AG04450 (cell line): ENCODE measurements at regions of chr21 and their contacts with region 1.

Region 1: GRCh38 chr21:38355992-38356797 is 99.4 kb downstream of the KCNJ15 start:
- DNase-seq: peak; percentile 27
- H3K4me3 ChIP-seq: no peak overlapping the region
- H3K27ac ChIP-seq: no peak overlapping the region
- H3K27me3 ChIP-seq: peaks cover 2% of the 10 kb centered on the region
- CTCF ChIP-seq: peak; percentile 100

Region 2: GRCh38 chr21:37711836-37712568 is 644.2 kb before region 1 on chr21:
- CTCF ChIA-PET with region 1: interaction called, 16 read pairs
- POLR2A ChIA-PET with region 1: no interaction called
- DNase-seq: peak; percentile 30
- H3K4me3 ChIP-seq: no peak overlapping the region
- H3K27ac ChIP-seq: no peak overlapping the region
- H3K27me3 ChIP-seq: peaks cover 7% of the 10 kb centered on the region
- CTCF ChIP-seq: peak; percentile 99

Region 3: DNA sequence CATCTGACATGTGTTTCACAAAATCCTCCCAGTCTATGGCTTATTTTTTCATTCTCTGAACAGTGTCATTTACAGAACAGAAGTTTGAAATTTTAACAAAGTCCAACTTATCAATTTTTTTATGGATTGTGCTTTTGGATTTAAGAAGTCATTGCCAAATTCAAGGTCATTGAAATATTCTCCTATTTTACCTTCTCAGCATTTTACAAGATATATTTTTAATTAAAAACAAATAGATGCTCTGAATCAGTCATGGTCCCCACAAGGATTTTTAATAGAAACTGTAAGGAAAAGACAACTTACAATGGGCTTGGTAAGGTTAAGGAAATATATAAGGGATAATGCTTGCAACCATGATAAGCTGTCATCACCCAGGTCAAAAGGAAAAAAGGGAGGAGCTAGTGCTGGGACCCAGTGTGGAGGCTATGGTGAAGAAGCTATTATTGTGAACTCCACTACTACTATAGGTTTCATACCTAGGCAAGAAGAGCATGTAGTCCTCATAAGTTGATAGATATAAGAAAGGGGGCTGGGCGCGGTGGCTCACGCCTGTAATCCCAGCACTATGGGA is 243.9 kb before region 1 on chr21:
- CTCF ChIA-PET with region 1: no interaction called
- POLR2A ChIA-PET with region 1: no interaction called
- DNase-seq: no peak
- H3K4me3 ChIP-seq: no peak overlapping the region
- H3K27ac ChIP-seq: no peak overlapping the region
- H3K27me3 ChIP-seq: peaks cover 2% of the 10 kb centered on the region
- CTCF ChIP-seq: no peak

Region 4: DNA sequence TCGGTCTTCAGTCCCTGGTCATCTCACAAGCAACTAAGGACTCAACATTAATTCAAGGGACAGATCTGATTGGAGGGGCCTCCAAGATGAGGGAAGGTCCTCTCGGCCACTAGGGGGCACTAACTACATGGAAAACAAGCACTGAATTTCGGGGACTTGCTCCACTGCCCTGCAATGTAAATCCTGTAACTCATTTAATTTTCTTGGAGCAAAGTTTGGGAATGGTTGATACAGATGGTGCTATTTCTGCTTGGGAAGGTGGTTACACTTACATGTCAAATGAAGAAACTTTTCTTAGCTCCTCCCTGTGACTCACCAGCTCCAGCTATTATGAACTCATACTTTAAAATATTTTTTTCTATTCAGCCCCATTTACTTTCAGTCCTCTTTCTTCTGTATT is 196.8 kb before region 1 on chr21:
- CTCF ChIA-PET with region 1: interaction called, 123 read pairs
- POLR2A ChIA-PET with region 1: no interaction called
- DNase-seq: peak; percentile 74
- H3K4me3 ChIP-seq: no peak overlapping the region
- H3K27ac ChIP-seq: no peak overlapping the region
- H3K27me3 ChIP-seq: peaks cover 8% of the 10 kb centered on the region
- CTCF ChIP-seq: peak; percentile 90

Region 5: DNA sequence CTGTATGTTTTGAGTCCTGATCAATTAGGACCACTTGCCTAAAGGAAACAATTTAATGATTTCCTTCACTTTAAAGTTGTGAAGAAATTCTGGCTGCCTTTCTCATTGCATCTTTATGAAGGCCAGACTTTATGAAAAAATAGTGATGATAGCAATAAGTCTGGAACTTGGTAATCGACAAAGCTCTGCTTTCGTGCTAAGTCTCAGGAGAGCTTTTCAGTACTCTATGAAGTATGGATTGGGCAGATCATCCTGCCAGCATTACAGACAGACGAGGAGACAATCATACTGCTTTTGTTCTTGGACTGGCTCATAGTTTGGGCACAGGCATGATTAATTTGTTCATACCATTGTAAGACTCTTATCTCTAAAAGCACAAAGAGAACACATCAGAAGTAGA is 144.9 kb before region 1 on chr21:
- CTCF ChIA-PET with region 1: interaction called, 353 read pairs
- POLR2A ChIA-PET with region 1: no interaction called
- DNase-seq: no peak
- H3K4me3 ChIP-seq: no peak overlapping the region
- H3K27ac ChIP-seq: no peak overlapping the region
- H3K27me3 ChIP-seq: peaks cover 28% of the 10 kb centered on the region
- CTCF ChIP-seq: no peak

Region 6: GRCh38 chr21:38306433-38307141 is 49.6 kb before region 1 on chr21:
- CTCF ChIA-PET with region 1: interaction called, 13 read pairs
- POLR2A ChIA-PET with region 1: no interaction called
- DNase-seq: peak; percentile 93
- H3K4me3 ChIP-seq: no peak overlapping the region
- H3K27ac ChIP-seq: peak overlapping the region; percentile 81
- H3K27me3 ChIP-seq: no peaks in the 10 kb centered on the region
- CTCF ChIP-seq: no peak

Region 7: GRCh38 chr21:38455403-38455802 is 99.2 kb after region 1 on chr21:
- CTCF ChIA-PET with region 1: no interaction called
- POLR2A ChIA-PET with region 1: no interaction called
- DNase-seq: no peak
- H3K4me3 ChIP-seq: no peak overlapping the region
- H3K27ac ChIP-seq: no peak overlapping the region
- H3K27me3 ChIP-seq: peaks cover 7% of the 10 kb centered on the region
- CTCF ChIP-seq: no peak

Region 8: GRCh38 chr21:38531591-38531990 is 175.4 kb after region 1 on chr21:
- CTCF ChIA-PET with region 1: no interaction called
- POLR2A ChIA-PET with region 1: no interaction called
- DNase-seq: no peak
- H3K4me3 ChIP-seq: no peak overlapping the region
- H3K27ac ChIP-seq: no peak overlapping the region
- H3K27me3 ChIP-seq: no peaks in the 10 kb centered on the region
- CTCF ChIP-seq: no peak

Region 9: GRCh38 chr21:38639571-38640354 is 283.6 kb after region 1 on chr21:
- CTCF ChIA-PET with region 1: no interaction called
- POLR2A ChIA-PET with region 1: no interaction called
- DNase-seq: no peak
- H3K4me3 ChIP-seq: no peak overlapping the region
- H3K27ac ChIP-seq: no peak overlapping the region
- H3K27me3 ChIP-seq: peaks cover 61% of the 10 kb centered on the region
- CTCF ChIP-seq: no peak